AG04450 (cell line): ENCODE measurements at regions of chr11 and their contacts with region 1.

Region 1: DNA sequence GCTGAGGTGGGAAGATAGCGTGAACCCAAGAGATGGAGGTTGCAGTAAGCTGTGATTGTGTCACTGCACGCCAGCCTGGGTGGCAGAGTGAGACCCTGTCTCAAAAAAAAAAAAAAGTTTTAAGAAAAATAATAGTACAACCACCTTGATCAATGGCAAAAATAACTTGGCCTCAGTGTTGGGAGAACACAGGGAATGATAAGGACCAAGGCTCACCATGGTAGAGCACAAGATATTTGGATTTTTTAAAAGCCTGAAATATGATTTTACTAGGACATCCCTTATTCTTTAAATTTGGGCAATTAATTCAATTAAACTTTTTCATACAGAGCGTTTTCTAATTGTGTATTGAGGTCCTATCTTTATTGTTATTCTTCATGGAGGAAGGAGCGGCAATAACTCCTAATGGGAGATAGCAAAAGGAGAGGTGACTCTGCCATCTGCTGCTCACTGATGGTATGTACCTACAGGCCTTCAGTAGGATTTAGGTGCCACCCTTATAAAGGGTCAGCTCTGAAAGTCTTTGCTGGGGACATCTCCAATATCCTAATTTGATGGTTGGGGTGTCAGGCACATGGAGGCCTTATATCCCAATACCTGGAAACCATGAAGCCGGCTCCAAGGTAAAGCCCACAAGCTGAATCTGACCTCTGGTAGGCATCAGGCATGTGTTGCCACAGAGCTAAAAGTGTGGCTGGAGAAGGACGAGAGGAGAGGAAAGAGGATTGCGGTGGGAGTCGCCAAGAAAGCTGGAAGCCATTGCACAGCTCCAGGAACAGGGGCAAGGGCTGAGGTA is 21.9 kb upstream of the POLD3 start:
- DNase-seq: no peak
- H3K4me3 ChIP-seq: no peak overlapping the region
- H3K27ac ChIP-seq: no peak overlapping the region
- H3K27me3 ChIP-seq: peaks cover 12% of the 10 kb centered on the region
- CTCF ChIP-seq: peak; percentile 75

Region 2: GRCh38 chr11:74226907-74227306 is 343.6 kb before region 1 on chr11:
- CTCF ChIA-PET with region 1: no interaction called
- POLR2A ChIA-PET with region 1: no interaction called
- DNase-seq: no peak
- H3K4me3 ChIP-seq: no peak overlapping the region
- H3K27ac ChIP-seq: no peak overlapping the region
- H3K27me3 ChIP-seq: no peaks in the 10 kb centered on the region
- CTCF ChIP-seq: no peak

Region 3: GRCh38 chr11:74559110-74559933 is 11.1 kb before region 1 on chr11:
- CTCF ChIA-PET with region 1: interaction called, 11 read pairs
- POLR2A ChIA-PET with region 1: interaction called, 4 read pairs
- DNase-seq: no peak
- H3K4me3 ChIP-seq: no peak overlapping the region
- H3K27ac ChIP-seq: no peak overlapping the region
- H3K27me3 ChIP-seq: peaks cover 4% of the 10 kb centered on the region
- CTCF ChIP-seq: no peak